ENCODE measurements at regions of chr15 and their contacts with region 1.

Region 1: DNA sequence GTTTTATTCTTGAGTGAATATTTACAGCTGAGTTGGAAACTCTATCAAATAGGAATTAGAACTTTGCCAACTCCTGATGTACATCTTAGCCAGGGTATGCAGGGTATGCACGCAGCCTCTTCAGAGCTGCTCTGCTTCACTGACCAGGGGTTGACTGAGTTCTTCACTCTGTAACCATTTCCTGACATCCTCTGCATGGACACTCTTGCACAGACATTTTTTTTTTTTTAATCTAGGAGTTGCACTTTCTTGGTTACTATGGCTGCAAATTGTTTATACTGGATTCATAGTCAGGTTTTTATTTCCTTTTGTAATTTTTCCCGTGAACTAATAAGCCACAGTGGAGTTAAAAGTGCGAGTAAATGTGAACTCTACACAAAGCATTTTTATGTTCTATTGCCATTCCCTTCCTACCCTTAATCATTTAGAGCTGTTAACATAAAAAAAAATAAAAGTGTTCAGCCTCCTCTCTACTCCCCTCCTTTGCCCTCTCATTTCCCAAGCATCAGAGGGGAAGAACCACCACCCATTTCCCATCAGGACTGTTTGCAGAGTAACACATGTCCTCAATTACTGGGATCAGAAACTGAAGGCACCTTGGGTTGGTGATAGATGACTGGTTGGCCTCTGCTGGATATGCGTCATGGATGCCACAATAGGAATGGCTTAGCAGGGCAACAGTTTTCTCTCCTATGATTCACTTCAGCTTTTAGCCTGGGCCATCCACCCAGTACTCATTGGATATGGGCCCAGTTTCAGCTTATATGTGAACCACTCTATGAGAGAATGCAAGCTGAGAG is 54.0 kb downstream of the DUT start:
- DNase-seq: peak; percentile 98
- H3K4me3 ChIP-seq: no peak overlapping the region
- CTCF ChIP-seq: no peak

Region 2: DNA sequence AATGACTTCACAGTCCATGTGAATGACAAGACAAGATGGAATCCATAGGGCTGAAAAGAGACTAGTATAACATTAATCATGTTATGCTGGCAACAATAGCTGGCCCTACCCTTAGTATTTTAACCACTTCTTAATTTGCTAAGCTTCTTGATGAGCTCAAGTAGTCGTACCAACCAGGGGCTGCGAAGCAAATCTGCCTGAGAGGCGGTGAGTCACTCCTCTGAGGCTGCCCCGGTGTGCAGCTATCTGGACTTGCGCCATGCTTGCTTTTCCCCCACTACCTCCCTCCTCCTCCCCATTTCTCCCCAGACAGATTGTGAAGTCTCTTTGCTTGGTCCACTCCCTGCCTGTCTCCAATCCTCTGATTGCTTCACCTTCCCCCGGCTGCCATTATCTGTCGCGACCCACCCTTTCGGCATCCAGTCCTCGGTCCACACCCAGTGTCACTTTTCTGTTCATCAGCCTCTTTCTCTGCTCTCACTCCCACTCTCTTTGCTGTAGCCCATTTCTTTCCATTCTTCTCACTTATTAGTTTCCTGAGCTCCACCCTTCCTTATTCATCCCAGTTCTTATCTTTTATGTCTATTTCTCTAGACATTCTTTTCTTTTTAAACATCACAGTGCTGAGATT is 11.3 kb before region 1 on chr15:
- CTCF ChIA-PET with region 1: interaction called, 4 read pairs
- POLR2A ChIA-PET with region 1: interaction called, 10 read pairs
- DNase-seq: no peak
- H3K4me3 ChIP-seq: no peak overlapping the region
- CTCF ChIP-seq: no peak

Region 3: GRCh38 chr15:48395521-48396011 is 10.3 kb after region 1 on chr15:
- CTCF ChIA-PET with region 1: no interaction called
- POLR2A ChIA-PET with region 1: interaction called, 13 read pairs
- DNase-seq: peak; percentile 91
- H3K4me3 ChIP-seq: no peak overlapping the region
- CTCF ChIP-seq: no peak

Region 4: GRCh38 chr15:48785195-48785594 is 400.0 kb after region 1 on chr15:
- CTCF ChIA-PET with region 1: no interaction called
- POLR2A ChIA-PET with region 1: no interaction called
- DNase-seq: no peak
- H3K4me3 ChIP-seq: no peak overlapping the region
- CTCF ChIP-seq: no peak

Measured in AG04449 (cell line).